Posterior cingulate gyrus (tissue), 11 donors: ENCODE measurements at regions of chr13 and their contacts with region 1.

Region 1: GRCh38 chr13:45464687-45465453 is at the start of gene COG3:
- DNase-seq: peak; percentile 93 to 99 (median 94)

Region 2: GRCh38 chr13:45417790-45418534 is 46.9 kb before region 1 on chr13 and contains the start of gene SLC25A30:
- intact Hi-C with region 1: loop called (anchors 5 kb)
- DNase-seq: peak; percentile 79 to 99 (median 92)

Region 3: GRCh38 chr13:45768656-45769479 is 304.0 kb after region 1 on chr13:
- intact Hi-C with region 1: no loop called
- DNase-seq: no peak

Region 4: GRCh38 chr13:45974500-45974899 is 509.6 kb after region 1 on chr13:
- intact Hi-C with region 1: no loop called
- DNase-seq: no peak